ENCODE measurements at regions of chr3 and their contacts with region 1.

Region 1: GRCh38 chr3:184874709-184875644 is 63.0 kb downstream of the VPS8 start:
- DNase-seq: peak in 2 of 9 donors; percentile 2 to 4
- ATAC-seq: no peak
- H3K4me3 ChIP-seq: no peak overlapping the region
- H3K4me3 Mint-ChIP-seq: no peak overlapping the region
- H3K27ac ChIP-seq: no peak overlapping the region
- H3K27ac Mint-ChIP-seq: peak overlapping the region in 1 of 9 donors; percentile 8
- H3K4me1 ChIP-seq: no peaks in the 10 kb centered on the region
- H3K4me1 Mint-ChIP-seq: peaks cover 0 to 19% (median 1%) of the 10 kb centered on the region in 7 donors
- H3K27me3 ChIP-seq: no peaks in the 10 kb centered on the region
- H3K27me3 Mint-ChIP-seq: no peaks in the 10 kb centered on the region

Region 2: GRCh38 chr3:184864000-184864399 is 11.0 kb before region 1 on chr3:
- CTCF ChIA-PET with region 1: no interaction called
- POLR2A ChIA-PET with region 1: no interaction called
- intact Hi-C with region 1: no loop called
- DNase-seq: no peak
- ATAC-seq: no peak
- H3K4me3 ChIP-seq: no peak overlapping the region
- H3K4me3 Mint-ChIP-seq: no peak overlapping the region
- H3K27ac ChIP-seq: no peak overlapping the region
- H3K27ac Mint-ChIP-seq: no peak overlapping the region
- H3K4me1 ChIP-seq: no peaks in the 10 kb centered on the region
- H3K4me1 Mint-ChIP-seq: peaks cover 0 to 4% (median 0%) of the 10 kb centered on the region in 7 donors
- H3K27me3 ChIP-seq: no peaks in the 10 kb centered on the region
- H3K27me3 Mint-ChIP-seq: no peaks in the 10 kb centered on the region

Region 3: GRCh38 chr3:185176750-185177359 is 301.9 kb after region 1 on chr3:
- CTCF ChIA-PET with region 1: no interaction called
- POLR2A ChIA-PET with region 1: no interaction called
- intact Hi-C with region 1: loop called in 1 of 2 experiments (anchors 1 kb)
- DNase-seq: peak in 2 of 9 donors; percentile 14 to 15
- ATAC-seq: no peak
- H3K4me3 ChIP-seq: no peak overlapping the region
- H3K4me3 Mint-ChIP-seq: no peak overlapping the region
- H3K27ac ChIP-seq: no peak overlapping the region
- H3K27ac Mint-ChIP-seq: no peak overlapping the region
- H3K4me1 ChIP-seq: no peaks in the 10 kb centered on the region
- H3K4me1 Mint-ChIP-seq: peaks cover 0 to 4% (median 0%) of the 10 kb centered on the region in 7 donors
- H3K27me3 ChIP-seq: no peaks in the 10 kb centered on the region
- H3K27me3 Mint-ChIP-seq: peaks cover 0 to 6% (median 6%) of the 10 kb centered on the region in 5 donors

Region 4: GRCh38 chr3:185308126-185308754 is 433.3 kb after region 1 on chr3:
- CTCF ChIA-PET with region 1: no interaction called
- POLR2A ChIA-PET with region 1: no interaction called
- intact Hi-C with region 1: loop called in 1 of 2 experiments (anchors 5 kb)
- DNase-seq: peak in 7 of 9 donors; percentile 6 to 45 (median 23)
- ATAC-seq: peak; percentile 65
- H3K4me3 ChIP-seq: no peak overlapping the region
- H3K4me3 Mint-ChIP-seq: no peak overlapping the region
- H3K27ac ChIP-seq: no peak overlapping the region
- H3K27ac Mint-ChIP-seq: no peak overlapping the region
- H3K4me1 ChIP-seq: no peaks in the 10 kb centered on the region
- H3K4me1 Mint-ChIP-seq: peaks cover 0 to 5% (median 0%) of the 10 kb centered on the region in 7 donors
- H3K27me3 ChIP-seq: no peaks in the 10 kb centered on the region
- H3K27me3 Mint-ChIP-seq: peaks cover 0 to 5% (median 0%) of the 10 kb centered on the region in 5 donors